Activated B cell treated with CpG ODN at 0.5 μM for 24 hours (primary cell): ENCODE measurements at regions of chr1 and their contacts with region 1.

Region 1: GRCh38 chr1:202998836-202999750 is 8.1 kb upstream of the TMEM183A start:
- DNase-seq: no peak
- ATAC-seq: peak; percentile 75
- H3K4me3 Mint-ChIP-seq: peak overlapping the region; percentile 74
- H3K27ac Mint-ChIP-seq: peak overlapping the region; percentile 81
- H3K4me1 Mint-ChIP-seq: peaks cover 18% of the 10 kb centered on the region
- H3K27me3 Mint-ChIP-seq: peaks cover 2% of the 10 kb centered on the region
- CTCF ChIP-seq: peak; percentile 56

Region 2: GRCh38 chr1:202462342-202463076 is 536.6 kb before region 1 on chr1:
- CTCF ChIA-PET with region 1: no interaction called
- POLR2A ChIA-PET with region 1: no interaction called
- intact Hi-C with region 1: loop called (anchors 2 kb)
- DNase-seq: no peak
- ATAC-seq: no peak
- H3K4me3 Mint-ChIP-seq: no peak overlapping the region
- H3K27ac Mint-ChIP-seq: no peak overlapping the region
- H3K4me1 Mint-ChIP-seq: no peaks in the 10 kb centered on the region
- H3K27me3 Mint-ChIP-seq: no peaks in the 10 kb centered on the region
- CTCF ChIP-seq: no peak

Region 3: DNA sequence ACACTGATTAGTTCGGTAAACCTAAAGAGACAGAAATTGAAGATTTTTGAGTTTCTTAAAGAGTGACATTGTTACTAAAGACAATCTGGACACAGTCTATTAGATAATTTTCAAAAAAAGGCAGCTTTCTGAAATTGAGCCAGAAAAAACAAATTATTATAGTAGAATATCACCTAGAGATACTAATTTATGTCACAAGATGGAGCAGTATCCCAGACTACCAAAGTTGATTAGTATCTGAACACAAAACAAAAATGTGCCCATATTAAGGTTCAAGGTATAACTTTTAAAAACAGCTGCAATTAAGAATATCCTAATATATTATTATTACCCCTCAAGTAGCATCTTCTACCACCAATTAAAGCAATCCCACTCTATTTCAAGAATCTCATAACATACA is 248.3 kb before region 1 on chr1:
- CTCF ChIA-PET with region 1: interaction called, 33 read pairs
- POLR2A ChIA-PET with region 1: no interaction called
- intact Hi-C with region 1: loop called (anchors 1 kb)
- DNase-seq: no peak
- ATAC-seq: peak; percentile 25
- H3K4me3 Mint-ChIP-seq: no peak overlapping the region
- H3K27ac Mint-ChIP-seq: no peak overlapping the region
- H3K4me1 Mint-ChIP-seq: no peaks in the 10 kb centered on the region
- H3K27me3 Mint-ChIP-seq: no peaks in the 10 kb centered on the region
- CTCF ChIP-seq: no peak

Region 4: GRCh38 chr1:202926720-202927491 is 72.2 kb before region 1 on chr1 and contains the start of gene KLHL12:
- CTCF ChIA-PET with region 1: interaction called, 12 read pairs
- POLR2A ChIA-PET with region 1: interaction called, 4 read pairs
- intact Hi-C with region 1: loop called (anchors 1 kb)
- DNase-seq: peak; percentile 92
- ATAC-seq: peak; percentile 93
- H3K4me3 Mint-ChIP-seq: peak within 1 kb of the TSS; percentile 94
- H3K27ac Mint-ChIP-seq: peak within 1 kb of the TSS; percentile 92
- H3K4me1 Mint-ChIP-seq: peaks cover 24% of the 10 kb centered on the region
- H3K27me3 Mint-ChIP-seq: no peaks in the 10 kb centered on the region
- CTCF ChIP-seq: no peak
- total RNA-seq, gene KLHL12: 30.4 and 30.8 TPM in 2 replicates

Region 5: DNA sequence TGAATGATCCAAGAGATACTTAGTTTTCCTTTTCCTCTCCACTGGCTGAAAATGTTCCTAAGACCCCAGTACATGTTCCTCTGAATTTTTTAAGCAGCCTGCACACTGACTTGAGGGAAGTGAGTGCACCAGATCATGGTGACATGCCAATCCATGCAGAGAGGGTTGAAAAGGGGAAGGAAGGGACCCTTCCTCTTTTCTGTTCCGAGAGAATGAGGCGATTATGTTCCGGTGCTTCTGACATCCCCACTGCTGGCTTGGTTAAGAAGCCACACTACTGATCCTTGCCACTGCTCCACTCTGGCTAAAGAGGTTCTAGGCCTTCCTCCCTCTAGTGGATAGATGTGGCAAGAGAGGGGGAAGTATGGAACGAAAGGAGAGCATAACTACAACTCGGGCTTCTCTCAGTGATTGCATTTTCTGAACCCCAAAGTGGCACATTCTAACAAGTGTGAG is 30.2 kb before region 1 on chr1:
- CTCF ChIA-PET with region 1: interaction called, 9 read pairs
- POLR2A ChIA-PET with region 1: interaction called, 4 read pairs
- intact Hi-C with region 1: loop called (anchors 1 kb)
- DNase-seq: peak; percentile 30
- ATAC-seq: peak; percentile 65
- H3K4me3 Mint-ChIP-seq: peak overlapping the region; percentile 89
- H3K27ac Mint-ChIP-seq: peak overlapping the region; percentile 88
- H3K4me1 Mint-ChIP-seq: peaks cover 45% of the 10 kb centered on the region
- H3K27me3 Mint-ChIP-seq: no peaks in the 10 kb centered on the region
- CTCF ChIP-seq: no peak